MCF 10A (cell line): ENCODE measurements at regions of chr17 and their contacts with region 1.

Region 1: GRCh38 chr17:70405492-70406220 is 236.3 kb downstream of the KCNJ2 start:
- DNase-seq: peak; percentile 96
- H3K4me3 Mint-ChIP-seq: peak overlapping the region; percentile 57
- H3K27ac Mint-ChIP-seq: peak overlapping the region; percentile 80
- H3K4me1 Mint-ChIP-seq: peaks cover 45% of the 10 kb centered on the region
- H3K27me3 Mint-ChIP-seq: no peaks in the 10 kb centered on the region
- CTCF ChIP-seq: no peak

Region 2: DNA sequence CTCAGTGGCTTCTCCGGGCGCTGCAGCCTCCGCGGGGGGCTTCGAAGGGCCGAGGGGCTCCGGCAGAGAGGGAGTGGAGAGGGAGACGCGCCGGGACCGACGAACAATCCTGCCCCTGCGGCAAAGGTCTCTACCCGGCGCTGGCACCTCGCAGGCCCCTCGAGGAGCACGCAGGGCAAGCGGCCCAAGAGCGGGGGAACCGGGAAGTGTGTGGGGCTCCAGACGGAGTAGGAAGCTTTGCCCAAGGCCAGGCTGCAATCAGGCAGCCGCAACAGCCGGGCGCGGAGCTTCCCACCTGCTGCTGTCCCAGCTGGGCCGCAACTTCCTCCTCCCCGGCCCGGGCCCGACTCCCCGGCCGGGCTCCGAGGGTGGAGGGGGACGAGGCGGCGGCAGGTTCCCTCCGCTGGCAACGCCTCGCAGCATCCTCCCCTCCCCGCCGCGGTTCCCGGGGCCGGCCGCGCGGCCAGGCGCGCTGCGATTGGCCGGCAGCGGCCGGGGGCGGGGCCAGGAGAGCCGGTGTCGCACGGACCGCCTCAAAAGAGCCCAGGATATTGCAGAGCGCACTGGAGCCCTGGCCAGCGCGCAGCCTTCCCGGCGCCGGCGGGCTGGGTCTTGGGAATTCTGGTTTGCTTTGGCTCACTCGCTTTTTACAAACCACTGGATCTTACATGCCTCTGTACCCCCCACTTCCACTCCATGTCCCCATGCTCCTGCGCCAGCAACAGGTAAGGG is 236.5 kb before region 1 on chr17 and contains the start of gene KCNJ2:
- CTCF ChIA-PET with region 1: no interaction called
- POLR2A ChIA-PET with region 1: interaction called, 22 read pairs
- intact Hi-C with region 1: no loop called
- DNase-seq: peak; percentile 76
- H3K4me3 Mint-ChIP-seq: peak within 1 kb of the TSS; percentile 76
- H3K27ac Mint-ChIP-seq: peak within 1 kb of the TSS; percentile 10
- H3K4me1 Mint-ChIP-seq: peaks cover 34% of the 10 kb centered on the region
- H3K27me3 Mint-ChIP-seq: no peaks in the 10 kb centered on the region
- CTCF ChIP-seq: no peak
- total RNA-seq, gene KCNJ2: 0.19 and 0.54 TPM in 2 replicates

Region 3: GRCh38 chr17:70184770-70185169 is 220.9 kb before region 1 on chr17:
- CTCF ChIA-PET with region 1: no interaction called
- POLR2A ChIA-PET with region 1: interaction called, 4 read pairs
- intact Hi-C with region 1: loop called (anchors 10 kb)
- DNase-seq: peak; percentile 79
- H3K4me3 Mint-ChIP-seq: no peak overlapping the region
- H3K27ac Mint-ChIP-seq: peak overlapping the region; percentile 18
- H3K4me1 Mint-ChIP-seq: peaks cover 16% of the 10 kb centered on the region
- H3K27me3 Mint-ChIP-seq: no peaks in the 10 kb centered on the region
- CTCF ChIP-seq: no peak

Region 4: DNA sequence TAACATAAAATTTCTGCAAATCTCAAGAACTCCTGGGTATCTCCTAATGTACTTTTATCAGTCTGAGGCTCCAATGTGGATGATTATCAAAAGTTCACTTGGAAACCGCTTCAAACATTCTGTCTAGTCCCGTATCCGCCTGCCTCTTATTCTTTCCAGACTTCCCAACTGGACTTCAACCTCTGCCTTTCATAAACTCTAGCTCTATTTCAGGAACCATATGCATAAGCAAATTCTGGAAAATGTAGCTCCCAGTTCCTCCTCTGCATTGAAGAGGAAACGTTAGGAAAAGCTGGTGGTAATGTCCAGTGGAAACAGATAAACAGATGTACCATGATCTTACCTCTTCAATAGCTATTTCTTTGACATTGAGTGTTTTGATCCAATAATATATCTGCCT is 48.7 kb after region 1 on chr17:
- CTCF ChIA-PET with region 1: no interaction called
- POLR2A ChIA-PET with region 1: no interaction called
- intact Hi-C with region 1: no loop called
- DNase-seq: no peak
- H3K4me3 Mint-ChIP-seq: no peak overlapping the region
- H3K27ac Mint-ChIP-seq: no peak overlapping the region
- H3K4me1 Mint-ChIP-seq: no peaks in the 10 kb centered on the region
- H3K27me3 Mint-ChIP-seq: no peaks in the 10 kb centered on the region
- CTCF ChIP-seq: no peak

Region 5: GRCh38 chr17:70510288-70510687 is 104.6 kb after region 1 on chr17:
- CTCF ChIA-PET with region 1: no interaction called
- POLR2A ChIA-PET with region 1: no interaction called
- intact Hi-C with region 1: no loop called
- DNase-seq: no peak
- H3K4me3 Mint-ChIP-seq: no peak overlapping the region
- H3K27ac Mint-ChIP-seq: no peak overlapping the region
- H3K4me1 Mint-ChIP-seq: no peaks in the 10 kb centered on the region
- H3K27me3 Mint-ChIP-seq: no peaks in the 10 kb centered on the region
- CTCF ChIP-seq: no peak